ENCODE measurements at regions of chr14 and their contacts with region 1.

Region 1: DNA sequence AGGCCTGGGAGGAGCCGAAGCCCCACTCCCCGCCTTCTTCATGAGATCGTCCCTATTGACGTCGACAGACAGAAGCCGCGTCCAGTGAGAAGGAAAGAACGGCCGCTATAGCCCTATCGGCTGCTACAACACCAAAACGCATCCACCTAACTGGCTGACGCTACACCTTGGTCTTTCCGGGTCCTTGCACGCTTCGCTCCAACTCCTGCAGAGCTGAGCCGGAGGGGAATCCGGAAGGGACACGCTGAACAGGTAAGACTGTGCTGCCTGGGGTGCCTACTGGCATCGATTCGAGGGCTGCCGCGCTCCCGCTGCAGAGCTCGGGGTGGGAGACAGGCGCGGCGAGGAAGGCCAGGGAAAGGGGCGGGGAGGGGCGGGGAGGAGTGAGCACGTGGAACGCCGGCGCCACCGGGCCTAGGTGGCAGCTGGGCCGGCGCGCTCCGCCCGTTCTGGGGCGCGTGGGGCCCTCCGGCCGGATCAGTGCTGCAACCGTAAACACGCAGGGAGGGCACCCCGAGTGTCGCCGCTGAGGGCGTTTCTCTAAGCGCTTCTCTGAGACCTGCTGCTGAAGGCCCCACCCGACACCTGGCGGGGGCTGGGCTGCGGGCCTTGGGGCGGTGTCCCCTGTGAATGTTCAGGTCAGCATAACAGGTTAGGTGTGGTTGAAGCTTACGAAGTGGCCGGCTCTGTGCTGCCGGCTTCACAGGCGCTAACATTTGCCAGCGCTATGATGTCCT is at the start of gene DCAF4:
- DNase-seq: peak; percentile 96
- H3K4me3 Mint-ChIP-seq: peak within 1 kb of the TSS; percentile 94
- H3K27ac Mint-ChIP-seq: peak within 1 kb of the TSS; percentile 56
- H3K4me1 Mint-ChIP-seq: peaks cover 6% of the 10 kb centered on the region
- H3K27me3 Mint-ChIP-seq: no peaks in the 10 kb centered on the region
- total RNA-seq, gene DCAF4: 13.3 to 16.4 TPM

Region 2: DNA sequence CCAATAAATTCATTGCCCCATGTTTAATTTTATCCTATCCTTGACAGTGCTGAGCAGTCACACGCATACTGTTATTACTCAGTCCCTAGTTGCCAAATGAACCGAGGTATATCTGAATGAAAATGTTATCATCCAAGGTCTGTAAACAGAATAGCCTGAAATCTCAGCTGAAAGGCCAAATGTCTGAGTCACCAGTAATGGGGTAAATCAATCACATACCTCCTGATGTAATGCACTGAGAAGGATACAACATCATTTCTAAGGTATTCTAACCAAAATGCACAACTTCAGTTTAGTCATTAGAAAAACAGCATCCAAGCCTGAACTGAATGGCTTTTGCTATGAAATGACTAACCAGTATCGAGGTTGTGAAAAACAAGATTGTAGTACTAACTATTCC is 261.2 kb before region 1 on chr14:
- CTCF ChIA-PET with region 1: no interaction called
- intact Hi-C with region 1: no loop called
- DNase-seq: no peak
- H3K4me3 Mint-ChIP-seq: no peak overlapping the region
- H3K27ac Mint-ChIP-seq: no peak overlapping the region
- H3K4me1 Mint-ChIP-seq: no peaks in the 10 kb centered on the region
- H3K27me3 Mint-ChIP-seq: peaks cover 2% of the 10 kb centered on the region

Region 3: DNA sequence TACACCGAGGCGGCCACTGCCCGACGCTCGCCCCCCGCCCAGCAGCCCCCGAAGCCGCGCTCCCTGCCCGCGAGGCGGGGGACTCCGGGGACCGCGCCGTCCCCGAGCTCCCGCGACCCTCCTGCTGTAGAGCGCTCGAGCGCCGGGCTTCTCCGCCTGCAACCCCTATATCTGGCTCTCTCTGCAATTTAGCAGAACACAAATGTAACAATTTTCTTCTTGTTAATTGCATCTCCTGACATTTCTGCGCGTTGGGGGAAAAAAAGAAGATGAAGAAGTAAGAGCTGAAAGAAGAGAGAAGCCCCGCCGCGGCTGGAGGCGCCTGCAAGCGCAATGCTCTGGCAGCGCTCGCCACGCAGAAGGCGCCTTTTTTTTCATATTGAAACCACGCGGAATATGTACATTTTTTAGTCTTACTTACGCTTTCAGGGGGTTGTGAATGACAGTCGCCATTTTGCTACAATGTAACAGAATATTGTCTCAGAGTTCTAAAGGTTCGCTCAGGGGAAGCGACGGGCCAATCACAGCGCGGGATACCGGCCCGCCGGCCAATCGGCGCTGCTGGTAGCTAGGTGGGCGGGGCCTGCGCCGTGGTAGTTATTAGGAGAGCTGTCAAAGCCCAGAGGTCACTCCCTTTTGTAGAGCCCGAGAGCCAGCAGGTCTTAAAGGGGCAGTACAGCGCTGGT is 32.7 kb before region 1 on chr14 and contains the start of gene DPF3:
- CTCF ChIA-PET with region 1: no interaction called
- intact Hi-C with region 1: loop called (anchors 1 kb)
- DNase-seq: peak; percentile 91
- H3K4me3 Mint-ChIP-seq: peak within 1 kb of the TSS; percentile 87
- H3K27ac Mint-ChIP-seq: peak within 1 kb of the TSS; percentile 46
- H3K4me1 Mint-ChIP-seq: peaks cover 18% of the 10 kb centered on the region
- H3K27me3 Mint-ChIP-seq: peaks cover 50% of the 10 kb centered on the region
- total RNA-seq, gene DPF3: 0.29 to 0.47 TPM

Region 4: GRCh38 chr14:72948481-72949138 is 22.1 kb after region 1 on chr14:
- CTCF ChIA-PET with region 1: interaction called, 9 read pairs
- intact Hi-C with region 1: loop called (anchors 2 kb)
- DNase-seq: peak; percentile 82
- H3K4me3 Mint-ChIP-seq: no peak overlapping the region
- H3K27ac Mint-ChIP-seq: no peak overlapping the region
- H3K4me1 Mint-ChIP-seq: no peaks in the 10 kb centered on the region
- H3K27me3 Mint-ChIP-seq: no peaks in the 10 kb centered on the region

Region 5: GRCh38 chr14:73136387-73137225 is 210.1 kb after region 1 on chr14 and contains the start of gene PSEN1:
- CTCF ChIA-PET with region 1: no interaction called
- intact Hi-C with region 1: loop called (anchors 1 kb)
- DNase-seq: peak; percentile 98
- H3K4me3 Mint-ChIP-seq: peak within 1 kb of the TSS; percentile 98
- H3K27ac Mint-ChIP-seq: peak within 1 kb of the TSS; percentile 97
- H3K4me1 Mint-ChIP-seq: peaks cover 26% of the 10 kb centered on the region
- H3K27me3 Mint-ChIP-seq: no peaks in the 10 kb centered on the region
- total RNA-seq, gene PSEN1: 24.5 to 26.0 TPM

Region 6: GRCh38 chr14:73211251-73212040 is 285.0 kb after region 1 on chr14:
- CTCF ChIA-PET with region 1: no interaction called
- intact Hi-C with region 1: no loop called
- DNase-seq: no peak
- H3K4me3 Mint-ChIP-seq: no peak overlapping the region
- H3K27ac Mint-ChIP-seq: no peak overlapping the region
- H3K4me1 Mint-ChIP-seq: no peaks in the 10 kb centered on the region
- H3K27me3 Mint-ChIP-seq: no peaks in the 10 kb centered on the region

Region 7: GRCh38 chr14:73491256-73492042 is 565.0 kb after region 1 on chr14:
- CTCF ChIA-PET with region 1: no interaction called
- intact Hi-C with region 1: loop called (anchors 5 kb)
- DNase-seq: peak; percentile 74
- H3K4me3 Mint-ChIP-seq: peak overlapping the region; percentile 78
- H3K27ac Mint-ChIP-seq: no peak overlapping the region
- H3K4me1 Mint-ChIP-seq: peaks cover 42% of the 10 kb centered on the region
- H3K27me3 Mint-ChIP-seq: no peaks in the 10 kb centered on the region